ENCODE measurements at regions of chr3 and their contacts with region 1.

Region 1: GRCh38 chr3:45864760-45865519 is 21.4 kb upstream of the CCR9 start:
- DNase-seq: peak; percentile 48
- H3K4me3 Mint-ChIP-seq: no peak overlapping the region
- H3K27ac Mint-ChIP-seq: no peak overlapping the region
- H3K4me1 Mint-ChIP-seq: peaks cover 44% of the 10 kb centered on the region
- H3K27me3 Mint-ChIP-seq: peaks cover 53% of the 10 kb centered on the region

Region 2: GRCh38 chr3:45881078-45882022 is 16.4 kb after region 1 on chr3:
- CTCF ChIA-PET with region 1: interaction called, 3 read pairs
- intact Hi-C with region 1: loop called (anchors 1 kb)
- DNase-seq: peak; percentile 49
- H3K4me3 Mint-ChIP-seq: no peak overlapping the region
- H3K27ac Mint-ChIP-seq: no peak overlapping the region
- H3K4me1 Mint-ChIP-seq: peaks cover 14% of the 10 kb centered on the region
- H3K27me3 Mint-ChIP-seq: peaks cover 6% of the 10 kb centered on the region

Measured in activated naive CD4-positive, alpha-beta T cell treated with anti-CD3 and anti-CD28 coated beads for 36 hours (primary cell).